HCT116 (cell line): ENCODE measurements at regions of chr4 and their contacts with region 1.

Region 1: DNA sequence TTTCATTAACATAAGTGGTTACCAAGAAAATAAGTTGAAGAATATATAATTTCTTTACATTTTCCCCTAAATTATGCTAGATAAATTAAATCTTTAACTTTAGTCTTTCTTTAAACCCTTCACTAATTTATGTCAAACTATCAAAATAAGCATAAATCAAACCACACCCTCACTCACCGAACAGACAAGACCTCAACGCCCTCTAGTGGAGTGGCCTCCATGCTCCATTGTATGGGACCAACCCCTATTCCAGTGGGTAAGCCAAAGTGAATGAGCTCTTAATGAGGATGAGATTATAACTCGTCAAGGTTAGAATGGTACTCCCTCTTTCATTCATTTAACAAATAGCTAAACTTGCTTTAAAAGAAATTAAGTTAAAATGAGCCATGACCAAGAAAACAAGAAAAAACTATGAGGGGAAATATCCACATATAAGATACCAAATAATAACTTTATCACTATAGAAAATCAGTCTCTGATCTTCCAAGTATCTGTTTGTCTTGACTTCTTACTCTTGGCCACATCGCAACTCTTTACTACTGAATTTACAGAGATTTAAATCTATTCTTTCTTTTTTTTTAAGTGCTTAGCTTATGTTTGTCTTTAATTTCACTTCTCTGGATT is 15.6 kb upstream of the BBS12 start:
- DNase-seq: peak; percentile 67
- ATAC-seq: peak; percentile 100
- H3K4me3 ChIP-seq: no peak overlapping the region
- H3K27ac ChIP-seq: no peak overlapping the region
- H3K4me1 ChIP-seq: no peaks in the 10 kb centered on the region
- H3K27me3 ChIP-seq: no peaks in the 10 kb centered on the region
- CTCF ChIP-seq: peak; percentile 67 to 95 (median 89); a peak in 5 of 6 replicates
- POLR2A ChIP-seq: no peak
- RAD21 ChIP-seq: peak; percentile 78

Region 2: GRCh38 chr4:122602277-122603142 is 114.4 kb before region 1 on chr4:
- CTCF ChIA-PET with region 1: interaction called, 13 read pairs
- POLR2A ChIA-PET with region 1: no interaction called
- RAD21 ChIA-PET with region 1: no interaction called
- intact Hi-C with region 1: loop called (anchors 2 kb)
- DNase-seq: peak; percentile 49
- ATAC-seq: peak; percentile 94
- H3K4me3 ChIP-seq: peak overlapping the region; percentile 21 to 31
- H3K27ac ChIP-seq: no peak overlapping the region
- H3K4me1 ChIP-seq: peaks cover 0 to 8% of the 10 kb centered on the region in 2 experiments; a peak in 1 of 4 replicates
- H3K27me3 ChIP-seq: no peaks in the 10 kb centered on the region
- CTCF ChIP-seq: peak; percentile 40 to 68 (median 53)
- POLR2A ChIP-seq: no peak
- RAD21 ChIP-seq: peak; percentile 82

Region 3: DNA sequence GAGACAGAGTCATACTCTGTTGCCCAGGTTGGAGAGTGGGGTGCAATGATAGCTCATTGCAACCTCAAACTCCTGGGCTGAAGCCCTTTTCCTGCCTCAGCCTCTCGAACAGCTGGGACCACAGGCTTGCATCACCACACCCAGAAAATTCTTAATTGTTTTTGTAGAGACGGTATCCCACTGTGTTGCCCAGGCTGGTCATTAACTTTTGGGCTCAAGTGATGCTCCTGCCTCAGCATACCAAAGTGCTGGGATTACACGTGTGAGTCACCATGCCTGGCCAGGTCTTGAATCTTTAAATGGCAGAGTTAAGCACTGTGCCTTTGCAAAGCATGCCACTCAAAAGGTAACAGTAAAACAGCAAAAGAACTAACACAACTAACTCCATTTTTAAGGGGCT is 13.1 kb before region 1 on chr4:
- CTCF ChIA-PET with region 1: interaction called, 10 read pairs
- POLR2A ChIA-PET with region 1: no interaction called
- RAD21 ChIA-PET with region 1: no interaction called
- intact Hi-C with region 1: no loop called
- DNase-seq: no peak
- ATAC-seq: no peak
- H3K4me3 ChIP-seq: no peak overlapping the region
- H3K27ac ChIP-seq: no peak overlapping the region
- H3K4me1 ChIP-seq: peaks cover 0 to 12% of the 10 kb centered on the region in 2 experiments; a peak in 2 of 4 replicates
- H3K27me3 ChIP-seq: no peaks in the 10 kb centered on the region
- CTCF ChIP-seq: no peak
- POLR2A ChIP-seq: no peak
- RAD21 ChIP-seq: no peak

Region 4: GRCh38 chr4:122732329-122733026 is 15.5 kb after region 1 on chr4 and contains the start of gene BBS12:
- CTCF ChIA-PET with region 1: interaction called, 24 read pairs
- POLR2A ChIA-PET with region 1: no interaction called
- RAD21 ChIA-PET with region 1: interaction called in 1 of 2 experiments, 3 read pairs
- intact Hi-C with region 1: no loop called
- DNase-seq: peak; percentile 98
- ATAC-seq: peak; percentile 97
- H3K4me3 ChIP-seq: peak within 1 kb of the TSS; percentile 78 to 83
- H3K27ac ChIP-seq: peak within 1 kb of the TSS; percentile 49
- H3K4me1 ChIP-seq: peaks cover 4 to 13% of the 10 kb centered on the region in 2 experiments; a peak in 2 of 4 replicates
- H3K27me3 ChIP-seq: no peaks in the 10 kb centered on the region
- CTCF ChIP-seq: peak in 1 of 3 experiments; percentile 38; a peak in 2 of 6 replicates
- POLR2A ChIP-seq: no peak
- RAD21 ChIP-seq: peak; percentile 43; the same call in 1 of the 2 replicates
- total RNA-seq, gene BBS12: 2.1 TPM

Region 5: GRCh38 chr4:122914292-122914904 is 197.5 kb after region 1 on chr4:
- CTCF ChIA-PET with region 1: interaction called, 10 read pairs
- POLR2A ChIA-PET with region 1: no interaction called
- RAD21 ChIA-PET with region 1: no interaction called
- intact Hi-C with region 1: no loop called
- DNase-seq: no peak
- ATAC-seq: peak; percentile 82
- H3K4me3 ChIP-seq: no peak overlapping the region
- H3K27ac ChIP-seq: no peak overlapping the region
- H3K4me1 ChIP-seq: peaks cover 4 to 6% of the 10 kb centered on the region in 2 experiments; a peak in 3 of 4 replicates
- H3K27me3 ChIP-seq: no peaks in the 10 kb centered on the region
- CTCF ChIP-seq: peak in 2 of 3 experiments; percentile 46 to 64; a peak in 4 of 6 replicates
- POLR2A ChIP-seq: no peak
- RAD21 ChIP-seq: peak; percentile 77

Region 6: GRCh38 chr4:122930862-122931261 is 213.9 kb after region 1 on chr4:
- CTCF ChIA-PET with region 1: interaction called, 12 read pairs
- POLR2A ChIA-PET with region 1: no interaction called
- RAD21 ChIA-PET with region 1: no interaction called
- intact Hi-C with region 1: no loop called
- DNase-seq: no peak
- ATAC-seq: no peak
- H3K4me3 ChIP-seq: no peak overlapping the region
- H3K27ac ChIP-seq: no peak overlapping the region
- H3K4me1 ChIP-seq: no peaks in the 10 kb centered on the region
- H3K27me3 ChIP-seq: no peaks in the 10 kb centered on the region
- CTCF ChIP-seq: peak in 2 of 3 experiments; percentile 55 to 64; a peak in 3 of 6 replicates
- POLR2A ChIP-seq: no peak
- RAD21 ChIP-seq: peak; percentile 60